WTC11 (cell line): ENCODE measurements at regions of chr9 and their contacts with region 1.

Region 1: GRCh38 chr9:120324996-120325642 is 254.8 kb downstream of the CDK5RAP2 start:
- DNase-seq: peak; percentile 63
- ATAC-seq: peak; percentile 99
- H3K4me3 Mint-ChIP-seq: no peak overlapping the region
- H3K27ac Mint-ChIP-seq: no peak overlapping the region
- H3K4me1 Mint-ChIP-seq: peaks cover 12% of the 10 kb centered on the region
- H3K27me3 Mint-ChIP-seq: peaks cover 40% of the 10 kb centered on the region
- CTCF ChIP-seq: peak; percentile 24; the same call in 1 of the 2 replicates

Region 2: GRCh38 chr9:120299785-120300184 is 25.3 kb before region 1 on chr9:
- CTCF ChIA-PET with region 1: interaction called, 10 read pairs
- POLR2A ChIA-PET with region 1: no interaction called
- DNase-seq: peak; percentile 36
- ATAC-seq: peak; percentile 95
- H3K4me3 Mint-ChIP-seq: no peak overlapping the region
- H3K27ac Mint-ChIP-seq: no peak overlapping the region
- H3K4me1 Mint-ChIP-seq: no peaks in the 10 kb centered on the region
- H3K27me3 Mint-ChIP-seq: no peaks in the 10 kb centered on the region
- CTCF ChIP-seq: no peak

Region 3: GRCh38 chr9:120308495-120308894 is 16.6 kb before region 1 on chr9:
- CTCF ChIA-PET with region 1: interaction called, 10 read pairs
- POLR2A ChIA-PET with region 1: no interaction called
- DNase-seq: peak; percentile 25
- ATAC-seq: peak; percentile 82
- H3K4me3 Mint-ChIP-seq: no peak overlapping the region
- H3K27ac Mint-ChIP-seq: no peak overlapping the region
- H3K4me1 Mint-ChIP-seq: peaks cover 19% of the 10 kb centered on the region
- H3K27me3 Mint-ChIP-seq: peaks cover 10% of the 10 kb centered on the region
- CTCF ChIP-seq: no peak